Motor neuron (in vitro differentiated cells): ENCODE measurements at regions of chr5 and their contacts with region 1.

Region 1: GRCh38 chr5:52657247-52657645 is 130.5 kb upstream of the ITGA1 start:
- ATAC-seq: peak in 3 of 8 experiments; percentile 23 to 46 (median 46)
- H3K4me3 ChIP-seq: no peak overlapping the region
- H3K27ac ChIP-seq: no peak overlapping the region
- H3K4me1 ChIP-seq: peaks cover 0 to 2% of the 10 kb centered on the region in 2 donors

Region 2: DNA sequence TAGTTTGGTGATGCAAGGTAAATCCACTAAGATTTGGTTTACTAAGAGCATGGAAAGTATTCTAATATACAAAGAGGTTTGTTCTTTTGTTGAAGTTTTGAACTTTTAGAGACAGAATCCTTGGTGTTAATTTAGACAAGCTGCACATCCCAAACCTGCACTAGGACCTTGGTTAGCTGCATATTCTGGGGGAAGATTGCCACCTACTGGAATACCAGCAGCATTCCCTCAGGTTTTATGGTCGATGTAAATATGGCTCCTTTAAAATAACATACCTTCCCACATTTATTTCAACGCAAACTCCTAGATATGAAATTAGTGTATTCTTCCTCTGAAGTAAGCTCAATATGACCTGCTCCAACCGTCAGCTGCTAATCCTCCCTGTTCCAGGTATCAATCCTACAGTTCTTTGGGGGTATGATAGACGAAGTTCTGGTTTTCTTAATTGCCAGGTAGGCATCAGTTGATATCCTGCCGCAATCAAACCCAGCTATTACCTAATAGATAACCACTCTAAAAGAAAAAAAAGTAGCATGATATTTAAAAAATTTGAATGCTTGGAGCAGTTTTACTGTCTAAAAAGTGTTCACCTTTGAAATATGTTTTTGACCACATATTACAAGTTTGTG is 649.9 kb before region 1 on chr5:
- in situ Hi-C with region 1: loop called in 2 of 9 experiments (anchors 25 kb)
- ATAC-seq: peak; percentile 62 to 91 (median 68)
- H3K4me3 ChIP-seq: no peak overlapping the region
- H3K27ac ChIP-seq: no peak overlapping the region
- H3K4me1 ChIP-seq: peaks cover 0 to 11% of the 10 kb centered on the region in 2 donors